ENCODE measurements at regions of chr1 and their contacts with region 1.

Region 1: DNA sequence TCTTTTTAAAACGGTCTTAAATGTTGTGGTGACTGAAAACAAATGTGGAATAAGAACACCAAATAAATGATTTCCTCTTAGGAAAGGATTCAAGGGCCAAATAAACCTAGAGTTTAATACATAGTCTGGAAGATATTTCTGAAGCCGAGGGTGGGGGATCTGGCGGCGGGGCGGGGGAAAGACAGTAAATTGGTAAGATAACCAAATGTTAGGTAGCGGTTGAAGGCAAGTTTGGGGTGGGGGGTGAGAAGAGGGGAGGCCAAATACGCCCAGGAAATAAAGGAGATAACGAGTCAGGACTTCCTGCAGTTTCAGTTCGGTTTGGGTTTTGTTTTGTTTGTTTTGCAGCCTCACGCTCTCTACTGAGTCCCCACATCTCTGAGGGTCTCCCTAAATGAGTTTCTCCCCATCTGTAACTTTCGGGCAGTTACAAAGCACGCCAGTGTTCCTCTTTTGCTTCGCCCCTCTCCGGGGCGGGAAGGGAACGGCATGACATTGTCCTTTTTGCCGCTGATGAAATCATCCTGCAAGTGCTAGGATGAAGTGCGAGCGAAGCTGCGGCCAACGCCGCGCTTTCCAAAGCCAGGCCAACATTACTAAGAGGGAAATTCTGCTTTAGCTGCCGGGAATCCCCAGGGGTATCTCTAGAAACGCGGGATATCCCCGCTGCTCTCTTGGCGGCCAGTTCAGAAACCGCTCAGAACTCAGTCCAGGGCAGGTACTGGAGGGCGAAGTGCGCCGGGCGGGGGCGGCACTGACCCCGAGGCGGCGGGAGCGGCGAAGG is 844 bp downstream of the NIBAN1 start:
- DNase-seq: peak; percentile 81
- H3K4me3 ChIP-seq: peak overlapping the region; percentile 74 to 82 (median 81)
- H3K27ac ChIP-seq: peak overlapping the region; percentile 23
- H3K4me1 ChIP-seq: peaks cover 17% of the 10 kb centered on the region
- H3K27me3 ChIP-seq: no peaks in the 10 kb centered on the region
- CTCF ChIP-seq: no peak

Region 2: DNA sequence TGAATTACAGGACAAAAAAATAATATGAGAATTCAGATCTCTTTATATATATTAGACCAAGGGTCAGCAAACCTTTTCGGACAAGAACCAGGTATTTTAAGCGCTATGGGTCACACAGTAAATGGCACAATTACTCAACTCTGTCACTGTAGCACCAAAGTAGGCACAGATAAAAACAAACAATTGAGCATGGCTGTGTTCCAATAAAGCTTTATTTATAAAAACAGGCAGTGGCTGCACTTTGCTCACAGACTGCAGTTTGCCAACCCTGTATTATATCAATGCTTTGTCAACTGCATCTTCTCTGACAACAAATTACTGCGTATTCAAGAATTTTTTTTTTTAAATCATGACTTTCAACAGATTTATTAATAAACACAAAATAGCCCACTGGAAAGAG is 248.6 kb before region 1 on chr1:
- CTCF ChIA-PET with region 1: no interaction called
- dilution Hi-C with region 1: no loop called
- in situ Hi-C with region 1: no loop called
- intact Hi-C with region 1: loop called (anchors 10 kb)
- DNase-seq: no peak
- H3K4me3 ChIP-seq: no peak overlapping the region
- H3K27ac ChIP-seq: no peak overlapping the region
- H3K4me1 ChIP-seq: peaks cover 10% of the 10 kb centered on the region
- H3K27me3 ChIP-seq: no peaks in the 10 kb centered on the region
- CTCF ChIP-seq: no peak

Region 3: GRCh38 chr1:184866991-184867788 is 106.3 kb before region 1 on chr1:
- CTCF ChIA-PET with region 1: no interaction called
- dilution Hi-C with region 1: no loop called
- in situ Hi-C with region 1: no loop called
- intact Hi-C with region 1: loop called (anchors 5 kb)
- DNase-seq: peak; percentile 98
- H3K4me3 ChIP-seq: no peak overlapping the region
- H3K27ac ChIP-seq: no peak overlapping the region
- H3K4me1 ChIP-seq: peaks cover 15% of the 10 kb centered on the region
- H3K27me3 ChIP-seq: peaks cover 29% of the 10 kb centered on the region
- CTCF ChIP-seq: no peak

Region 4: GRCh38 chr1:184892116-184892515 is 81.3 kb before region 1 on chr1:
- CTCF ChIA-PET with region 1: no interaction called
- dilution Hi-C with region 1: no loop called
- in situ Hi-C with region 1: no loop called
- intact Hi-C with region 1: loop called (anchors 2 kb)
- DNase-seq: peak; percentile 56
- H3K4me3 ChIP-seq: no peak overlapping the region
- H3K27ac ChIP-seq: no peak overlapping the region
- H3K4me1 ChIP-seq: peaks cover 34% of the 10 kb centered on the region
- H3K27me3 ChIP-seq: no peaks in the 10 kb centered on the region
- CTCF ChIP-seq: no peak

Region 5: GRCh38 chr1:184954231-184954995 is 19.1 kb before region 1 on chr1:
- CTCF ChIA-PET with region 1: no interaction called
- dilution Hi-C with region 1: no loop called
- in situ Hi-C with region 1: no loop called
- intact Hi-C with region 1: loop called (anchors 1 kb)
- DNase-seq: peak; percentile 54
- H3K4me3 ChIP-seq: peak overlapping the region in 2 of 3 experiments; percentile 5 to 16
- H3K27ac ChIP-seq: peak overlapping the region; percentile 95
- H3K4me1 ChIP-seq: peaks cover 20% of the 10 kb centered on the region
- H3K27me3 ChIP-seq: no peaks in the 10 kb centered on the region
- CTCF ChIP-seq: no peak

Region 6: GRCh38 chr1:185156854-185157598 is 183.6 kb after region 1 on chr1 and contains the starts of genes SWT1 and TRMT1L:
- CTCF ChIA-PET with region 1: no interaction called
- dilution Hi-C with region 1: no loop called
- in situ Hi-C with region 1: no loop called
- intact Hi-C with region 1: loop called (anchors 5 kb)
- DNase-seq: peak; percentile 99
- H3K4me3 ChIP-seq: peak within 1 kb of the TSS; percentile 87 to 94 (median 89)
- H3K27ac ChIP-seq: peak within 1 kb of the TSS; percentile 75
- H3K4me1 ChIP-seq: peaks cover 20% of the 10 kb centered on the region
- H3K27me3 ChIP-seq: no peaks in the 10 kb centered on the region
- CTCF ChIP-seq: no peak
- total RNA-seq, gene SWT1: 2.4 to 4.8 TPM
- total RNA-seq, gene TRMT1L: 17.0 to 23.0 TPM

Measured in mammary epithelial cell (primary cell).